Activated T-helper 1 cell treated with anti-CD3 and anti-CD28 coated beads, Interleukin-12 subunit alpha, Interleukin-12 subunit beta, Interleukin-2, Interleukin-4 antibody, amounts not matched to agents 30 ng/mL and 10 ng/mL and 1 ng/mL, durations not matched to agents 14 hours and 24 hours and 36 hours (primary cell): ENCODE measurements at regions of chr18 and their contacts with region 1.

Region 1: DNA sequence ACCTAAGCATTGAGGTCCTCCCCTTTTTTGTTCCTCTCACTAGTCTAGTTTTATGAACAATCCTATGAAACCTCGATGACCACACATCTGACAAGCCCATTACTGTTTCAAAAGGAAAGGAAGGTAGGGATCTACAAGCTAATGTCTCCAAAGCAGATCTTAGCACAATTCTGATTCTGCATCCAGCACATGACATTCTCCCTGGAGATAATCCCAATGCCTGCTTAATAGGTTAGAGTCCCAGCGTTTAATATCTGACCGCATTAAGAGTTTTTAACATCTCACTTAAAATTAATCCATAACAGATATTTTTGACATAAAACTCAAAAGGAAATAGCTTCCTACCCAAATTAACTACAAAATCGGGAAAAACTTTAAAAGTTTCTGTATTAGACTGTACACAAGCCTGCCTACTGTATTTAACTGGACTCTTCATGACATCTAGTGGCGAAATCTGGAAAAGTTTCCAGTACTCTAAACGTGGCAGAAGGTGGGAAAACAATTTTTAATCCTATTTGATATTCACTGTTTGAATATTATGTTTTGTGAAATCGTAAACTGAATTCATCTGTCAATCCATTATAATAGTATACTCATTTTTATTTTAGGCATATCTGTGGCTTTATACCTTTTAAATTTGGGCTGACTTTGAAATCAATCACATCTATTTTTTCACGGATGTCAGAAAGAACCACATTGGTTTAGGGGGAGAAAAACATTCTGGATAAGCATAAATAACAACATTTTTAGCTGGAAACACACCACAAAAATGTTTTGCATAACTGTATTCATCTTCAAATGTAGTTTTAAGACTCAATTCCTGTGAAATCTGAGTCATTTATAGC is 62.4 kb downstream of the TXNL1 start:
- DNase-seq: no peak
- H3K4me3 Mint-ChIP-seq: no peak overlapping the region
- H3K27ac Mint-ChIP-seq: no peak overlapping the region
- H3K4me1 Mint-ChIP-seq: no peaks in the 10 kb centered on the region
- H3K27me3 Mint-ChIP-seq: peaks cover 11% of the 10 kb centered on the region

Region 2: GRCh38 chr18:55234366-55235093 is 1341.5 kb before region 1 on chr18:
- intact Hi-C with region 1: loop called (anchors 2 kb)
- DNase-seq: peak; percentile 41
- H3K4me3 Mint-ChIP-seq: no peak overlapping the region
- H3K27ac Mint-ChIP-seq: no peak overlapping the region
- H3K4me1 Mint-ChIP-seq: peaks cover 5% of the 10 kb centered on the region
- H3K27me3 Mint-ChIP-seq: no peaks in the 10 kb centered on the region

Region 3: GRCh38 chr18:55343396-55344073 is 1232.5 kb before region 1 on chr18:
- intact Hi-C with region 1: loop called (anchors 1 kb)
- DNase-seq: no peak
- H3K4me3 Mint-ChIP-seq: no peak overlapping the region
- H3K27ac Mint-ChIP-seq: no peak overlapping the region
- H3K4me1 Mint-ChIP-seq: no peaks in the 10 kb centered on the region
- H3K27me3 Mint-ChIP-seq: peaks cover 3% of the 10 kb centered on the region

Region 4: GRCh38 chr18:55384551-55385275 is 1191.3 kb before region 1 on chr18:
- intact Hi-C with region 1: loop called (anchors 10 kb)
- DNase-seq: no peak
- H3K4me3 Mint-ChIP-seq: no peak overlapping the region
- H3K27ac Mint-ChIP-seq: no peak overlapping the region
- H3K4me1 Mint-ChIP-seq: no peaks in the 10 kb centered on the region
- H3K27me3 Mint-ChIP-seq: no peaks in the 10 kb centered on the region

Region 5: DNA sequence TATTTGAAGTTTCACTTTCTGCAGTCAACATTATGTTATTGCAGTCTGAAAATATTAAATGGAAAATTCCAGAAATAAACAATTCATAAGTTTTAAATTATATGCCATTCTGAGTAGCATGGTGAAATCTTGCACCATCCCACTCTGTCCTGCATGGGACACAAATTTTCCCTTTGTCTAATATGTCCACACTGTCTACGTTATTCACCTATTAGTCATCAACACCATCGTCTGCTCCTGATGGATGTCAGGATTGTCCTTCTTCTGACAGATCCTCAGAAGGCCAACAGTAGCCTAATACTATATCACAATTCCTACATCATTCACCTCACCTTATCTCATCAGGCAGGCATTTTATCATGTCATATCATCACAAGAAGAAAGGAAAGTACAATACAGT is 100.8 kb before region 1 on chr18:
- intact Hi-C with region 1: no loop called
- DNase-seq: no peak
- H3K4me3 Mint-ChIP-seq: no peak overlapping the region
- H3K27ac Mint-ChIP-seq: no peak overlapping the region
- H3K4me1 Mint-ChIP-seq: no peaks in the 10 kb centered on the region
- H3K27me3 Mint-ChIP-seq: no peaks in the 10 kb centered on the region